Sigmoid colon (tissue), 7 donors: ENCODE measurements at regions of chr20 and their contacts with region 1.

Region 1: DNA sequence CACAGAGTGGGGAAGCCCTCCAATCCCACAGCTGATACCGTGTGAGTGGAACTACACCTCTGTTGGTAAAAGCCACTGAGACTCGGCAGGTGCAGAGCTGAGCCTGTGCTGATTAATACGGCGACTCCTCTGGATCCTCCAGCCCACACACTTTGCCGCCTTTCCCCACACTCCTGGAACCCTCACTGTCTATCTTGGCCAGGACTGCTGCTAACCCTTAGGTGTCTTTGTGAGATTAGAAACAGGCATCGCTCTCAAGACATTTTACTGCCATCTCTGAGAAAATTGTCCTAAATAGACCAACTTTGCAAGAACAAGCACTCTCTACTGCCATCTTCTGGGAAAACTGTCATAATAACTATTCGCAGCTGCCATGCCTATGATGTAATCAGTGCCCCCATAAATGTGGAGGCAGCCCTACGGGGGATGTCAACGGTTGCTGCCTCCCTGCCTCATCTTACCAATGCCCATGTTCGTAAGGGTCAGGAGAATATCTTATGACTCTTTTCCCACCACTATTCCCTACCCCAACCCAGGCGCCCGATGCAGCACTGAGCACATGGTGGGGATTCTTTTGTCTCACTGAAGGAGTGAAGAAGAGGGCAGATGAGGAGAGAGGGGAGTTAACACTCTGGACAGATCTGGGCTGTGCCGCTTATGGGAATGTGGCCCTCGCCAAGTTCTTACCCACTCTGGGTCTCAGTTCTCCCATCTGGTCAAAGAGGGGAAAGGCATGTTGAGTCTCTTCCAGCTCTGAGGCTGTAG is 26.1 kb upstream of the KCNB1 start:
- DNase-seq: peak; percentile 58
- H3K4me3 ChIP-seq: no peak overlapping the region
- H3K27ac ChIP-seq: peak overlapping the region; percentile 53 to 86 (median 76)
- H3K4me1 ChIP-seq: peaks cover 0 to 40% (median 38%) of the 10 kb centered on the region in 4 donors
- H3K27me3 ChIP-seq: no peaks in the 10 kb centered on the region
- CTCF ChIP-seq: peak; percentile 40 to 61 (median 52)
- EP300 ChIP-seq: no peak
- POLR2A ChIP-seq: no peak

Region 2: GRCh38 chr20:49338061-49338460 is 170.6 kb before region 1 on chr20:
- intact Hi-C with region 1: loop called (anchors 1 kb)
- DNase-seq: no peak
- H3K4me3 ChIP-seq: no peak overlapping the region
- H3K27ac ChIP-seq: no peak overlapping the region
- H3K4me1 ChIP-seq: peaks cover 0 to 18% (median 11%) of the 10 kb centered on the region in 4 donors
- H3K27me3 ChIP-seq: no peaks in the 10 kb centered on the region
- CTCF ChIP-seq: no peak
- EP300 ChIP-seq: no peak
- POLR2A ChIP-seq: no peak